Activated CD4-positive, alpha-beta T cell treated with anti-CD3 and anti-CD28 coated beads for 36 hours (primary cell): ENCODE measurements at regions of chr22 and their contacts with region 1.

Region 1: DNA sequence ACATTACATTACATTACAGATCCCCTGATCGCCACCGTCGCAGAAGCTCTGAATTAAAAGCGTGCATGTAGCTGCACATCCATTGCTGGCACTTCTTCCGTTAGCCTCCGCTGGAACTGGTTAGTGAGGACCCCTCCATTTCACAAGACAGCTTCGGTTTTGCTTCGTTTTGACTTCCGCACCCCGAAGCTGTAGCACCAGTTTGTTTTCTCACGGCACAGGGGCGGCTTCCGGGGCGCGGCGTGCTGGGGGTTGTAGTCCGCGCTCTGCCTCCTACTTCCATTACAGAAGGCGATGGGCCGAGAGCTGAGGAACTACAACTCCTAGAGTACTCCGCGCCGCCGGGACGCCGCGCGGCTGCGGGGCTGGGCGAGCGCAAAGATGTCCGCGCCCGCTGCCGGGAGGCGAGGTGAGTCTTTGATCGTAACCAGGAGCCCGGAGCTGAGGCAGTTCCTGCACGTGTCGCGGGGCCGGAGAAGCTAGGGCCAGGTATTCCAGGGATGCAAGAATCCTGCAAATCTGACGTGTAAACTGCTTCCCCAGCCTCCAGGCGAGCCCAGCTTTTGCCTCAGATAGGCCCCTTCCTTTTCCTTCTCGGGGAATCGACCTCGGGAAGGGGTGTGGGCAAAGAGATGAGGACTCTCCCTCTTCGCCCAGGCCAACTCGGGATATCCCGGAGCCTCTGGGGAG is at the start of gene PEX26:
- DNase-seq: peak; percentile 97
- ATAC-seq: peak; percentile 98
- H3K4me3 Mint-ChIP-seq: peak within 1 kb of the TSS; percentile 89
- H3K27ac Mint-ChIP-seq: peak within 1 kb of the TSS; percentile 98
- H3K4me1 Mint-ChIP-seq: peaks cover 46% of the 10 kb centered on the region
- H3K27me3 Mint-ChIP-seq: no peaks in the 10 kb centered on the region
- total RNA-seq, gene PEX26: 50.7 to 58.0 TPM

Region 2: GRCh38 chr22:17077255-17077654 is 1000.5 kb before region 1 on chr22:
- CTCF ChIA-PET with region 1: no interaction called
- POLR2A ChIA-PET with region 1: no interaction called
- intact Hi-C with region 1: loop called in 1 of 2 experiments (anchors 2 kb)
- DNase-seq: no peak
- ATAC-seq: no peak
- H3K4me3 Mint-ChIP-seq: no peak overlapping the region
- H3K27ac Mint-ChIP-seq: no peak overlapping the region
- H3K4me1 Mint-ChIP-seq: peaks cover 24% of the 10 kb centered on the region
- H3K27me3 Mint-ChIP-seq: no peaks in the 10 kb centered on the region

Region 3: GRCh38 chr22:17213976-17214375 is 863.8 kb before region 1 on chr22:
- CTCF ChIA-PET with region 1: no interaction called
- POLR2A ChIA-PET with region 1: no interaction called
- intact Hi-C with region 1: loop called in 1 of 2 experiments (anchors 2 kb)
- DNase-seq: peak; percentile 74
- ATAC-seq: peak; percentile 49
- H3K4me3 Mint-ChIP-seq: no peak overlapping the region
- H3K27ac Mint-ChIP-seq: no peak overlapping the region
- H3K4me1 Mint-ChIP-seq: peaks cover 46% of the 10 kb centered on the region
- H3K27me3 Mint-ChIP-seq: no peaks in the 10 kb centered on the region

Region 4: GRCh38 chr22:17742527-17742902 is 335.3 kb before region 1 on chr22:
- CTCF ChIA-PET with region 1: interaction called, 14 read pairs
- POLR2A ChIA-PET with region 1: no interaction called
- intact Hi-C with region 1: loop called (anchors 1 to 2 kb)
- DNase-seq: peak; percentile 85
- ATAC-seq: peak; percentile 93
- H3K4me3 Mint-ChIP-seq: no peak overlapping the region
- H3K27ac Mint-ChIP-seq: no peak overlapping the region
- H3K4me1 Mint-ChIP-seq: peaks cover 4% of the 10 kb centered on the region
- H3K27me3 Mint-ChIP-seq: no peaks in the 10 kb centered on the region

Region 5: DNA sequence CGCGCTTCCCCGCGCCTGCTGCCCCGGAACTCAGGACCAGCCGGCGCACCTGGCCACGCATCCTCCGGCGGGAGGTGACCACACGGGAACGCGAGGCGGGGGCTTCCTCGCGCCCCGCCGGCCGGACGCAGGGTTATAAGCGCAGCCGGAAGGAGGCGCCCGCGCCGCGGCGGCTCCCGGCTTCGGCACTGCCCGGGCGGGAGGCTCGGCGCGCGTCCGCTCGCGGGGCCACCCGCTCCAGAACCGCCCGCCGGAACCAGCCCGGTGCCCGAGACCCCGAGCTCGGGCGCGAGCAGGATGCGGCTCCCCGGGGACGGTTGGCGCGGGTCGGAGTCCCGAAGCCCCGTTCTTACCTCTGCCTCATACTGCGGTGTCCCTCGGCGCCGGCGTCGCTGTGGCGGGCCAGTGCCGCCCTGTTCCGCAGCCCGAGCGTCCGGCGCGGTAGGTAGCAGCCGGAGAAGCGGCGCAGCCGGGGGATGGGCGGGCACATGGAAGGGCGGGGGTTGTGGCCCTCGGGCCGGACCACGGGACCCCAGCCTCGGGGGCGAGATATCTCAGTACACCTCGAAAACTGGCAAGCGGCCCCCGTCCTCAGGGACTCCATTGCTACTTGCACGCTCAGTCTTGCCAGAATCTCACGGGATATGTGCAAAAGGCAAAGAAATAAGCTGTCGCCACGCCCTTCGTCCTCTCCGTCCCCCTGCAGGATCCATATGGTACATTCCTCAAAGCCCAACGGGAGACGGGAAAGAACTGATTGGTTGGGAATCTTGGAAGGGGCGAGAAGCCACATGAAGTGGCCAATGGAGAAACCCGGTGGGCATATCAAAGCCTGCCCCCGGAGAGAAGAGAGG is 76.5 kb before region 1 on chr22:
- CTCF ChIA-PET with region 1: interaction called, 7 read pairs
- POLR2A ChIA-PET with region 1: interaction called, 3 read pairs
- intact Hi-C with region 1: loop called (anchors 1 to 5 kb)
- DNase-seq: peak; percentile 80
- ATAC-seq: peak; percentile 81
- H3K4me3 Mint-ChIP-seq: peak overlapping the region; percentile 88
- H3K27ac Mint-ChIP-seq: peak overlapping the region; percentile 95
- H3K4me1 Mint-ChIP-seq: peaks cover 42% of the 10 kb centered on the region
- H3K27me3 Mint-ChIP-seq: peaks cover 13% of the 10 kb centered on the region

Region 6: DNA sequence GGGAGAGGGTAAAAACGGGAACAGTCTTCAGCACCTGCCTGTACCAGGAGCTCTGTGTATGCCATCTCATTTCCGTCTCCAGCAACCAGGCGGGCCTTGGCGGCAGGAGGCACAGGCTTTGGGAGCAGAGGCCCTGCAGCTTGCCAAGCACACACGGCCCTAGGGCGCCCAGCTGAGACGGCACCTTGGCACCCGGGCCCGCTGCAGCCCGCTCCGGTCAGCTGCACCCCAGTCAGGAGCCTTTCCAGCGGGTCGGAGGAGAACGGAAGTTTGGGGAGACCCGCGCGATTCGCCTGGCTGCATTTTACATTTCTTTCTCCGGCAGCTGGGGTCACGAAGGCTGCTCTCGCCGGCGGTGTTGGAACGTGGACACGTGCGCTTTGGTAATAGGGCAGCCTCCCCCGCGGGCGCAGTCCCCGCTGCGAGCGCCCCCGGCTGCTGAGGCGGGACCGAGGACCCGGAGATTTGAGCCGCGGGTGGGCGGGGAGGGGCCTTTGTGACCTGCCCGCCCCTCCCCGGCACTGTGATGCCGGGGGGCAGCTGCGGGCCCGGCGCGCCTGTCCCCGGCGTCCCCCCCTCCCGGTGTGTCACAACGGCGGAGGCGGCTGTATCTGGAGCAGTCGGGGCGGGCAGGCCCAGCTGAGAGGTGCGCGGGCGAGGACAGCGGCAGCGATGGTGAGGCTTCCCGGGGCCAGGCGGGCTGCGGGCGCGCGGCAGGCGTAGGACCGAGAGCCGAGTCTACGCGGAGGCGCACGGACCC is 32.6 kb after region 1 on chr22 and contains the start of gene TUBA8:
- CTCF ChIA-PET with region 1: interaction called, 11 read pairs
- POLR2A ChIA-PET with region 1: interaction called, 11 read pairs
- intact Hi-C with region 1: loop called (anchors 2 to 5 kb)
- DNase-seq: peak; percentile 68
- ATAC-seq: peak; percentile 62
- H3K4me3 Mint-ChIP-seq: peak within 1 kb of the TSS; percentile 46
- H3K27ac Mint-ChIP-seq: no peak within 1 kb of the TSS
- H3K4me1 Mint-ChIP-seq: peaks cover 51% of the 10 kb centered on the region
- H3K27me3 Mint-ChIP-seq: peaks cover 39% of the 10 kb centered on the region
- total RNA-seq, gene TUBA8: 1.9 to 2.6 TPM

Region 7: GRCh38 chr22:18126601-18127000 is 48.8 kb after region 1 on chr22:
- CTCF ChIA-PET with region 1: no interaction called
- POLR2A ChIA-PET with region 1: no interaction called
- intact Hi-C with region 1: no loop called
- DNase-seq: no peak
- ATAC-seq: no peak
- H3K4me3 Mint-ChIP-seq: no peak overlapping the region
- H3K27ac Mint-ChIP-seq: no peak overlapping the region
- H3K4me1 Mint-ChIP-seq: no peaks in the 10 kb centered on the region
- H3K27me3 Mint-ChIP-seq: no peaks in the 10 kb centered on the region